PC-9 (cell line): ENCODE measurements at regions of chr14 and their contacts with region 1.

Region 1: GRCh38 chr14:32252030-32252670 is 49.1 kb upstream of the RNU6-8 start:
- DNase-seq: peak; percentile 31 to 50
- H3K4me3 ChIP-seq: no peak overlapping the region
- H3K27ac ChIP-seq: no peak overlapping the region
- H3K4me1 ChIP-seq: peaks cover 3% of the 10 kb centered on the region; the same call in 1 of the 2 replicates
- H3K27me3 ChIP-seq: no peaks in the 10 kb centered on the region
- CTCF ChIP-seq: peak; percentile 74

Region 2: DNA sequence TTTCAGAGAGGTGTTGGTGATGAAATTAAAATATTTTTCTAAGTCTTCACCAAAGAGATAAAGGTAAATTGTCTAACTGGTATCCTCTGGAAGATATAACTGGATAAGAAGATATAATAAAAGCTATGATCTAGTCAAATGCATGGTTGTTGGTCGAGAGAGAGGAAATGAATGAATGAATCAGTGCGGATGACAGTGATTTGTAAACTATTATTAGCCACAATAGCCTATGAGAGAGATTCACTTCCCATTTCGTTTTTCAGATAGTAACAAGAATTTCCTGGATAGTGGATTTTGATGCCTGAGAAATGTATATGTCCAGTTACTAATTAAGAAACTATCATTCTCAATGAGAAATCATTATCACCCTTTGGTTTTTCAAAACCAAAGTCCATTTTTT is 894.9 kb before region 1 on chr14:
- CTCF ChIA-PET with region 1: no interaction called
- POLR2A ChIA-PET with region 1: no interaction called
- intact Hi-C with region 1: loop called (anchors 10 kb)
- DNase-seq: no peak
- H3K4me3 ChIP-seq: no peak overlapping the region
- H3K27ac ChIP-seq: no peak overlapping the region
- H3K4me1 ChIP-seq: peaks cover 23% of the 10 kb centered on the region
- H3K27me3 ChIP-seq: no peaks in the 10 kb centered on the region
- CTCF ChIP-seq: no peak

Region 3: DNA sequence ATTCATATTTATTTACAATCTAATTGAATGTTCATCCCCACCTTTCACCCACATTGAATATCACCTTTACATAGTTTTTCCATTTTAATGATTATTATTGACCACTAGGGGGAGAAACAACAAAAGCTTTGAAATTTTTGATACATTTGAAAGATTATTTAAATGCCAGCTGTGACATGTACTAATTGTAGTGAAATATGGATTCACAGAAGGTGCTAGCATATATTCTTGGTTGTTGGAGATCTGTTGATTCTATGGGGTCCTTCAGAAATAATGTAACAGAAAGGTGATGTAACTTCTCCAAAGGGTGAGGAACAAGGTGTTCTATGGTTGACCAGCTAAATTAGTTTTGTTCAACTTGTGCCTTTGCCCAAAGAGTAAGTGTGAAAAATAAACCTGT is 741.9 kb before region 1 on chr14:
- CTCF ChIA-PET with region 1: interaction called, 4 read pairs
- POLR2A ChIA-PET with region 1: interaction called, 12 read pairs
- intact Hi-C with region 1: loop called (anchors 5 kb)
- DNase-seq: no peak
- H3K4me3 ChIP-seq: no peak overlapping the region
- H3K27ac ChIP-seq: no peak overlapping the region
- H3K4me1 ChIP-seq: no peaks in the 10 kb centered on the region
- H3K27me3 ChIP-seq: no peaks in the 10 kb centered on the region
- CTCF ChIP-seq: peak; percentile 81

Region 4: DNA sequence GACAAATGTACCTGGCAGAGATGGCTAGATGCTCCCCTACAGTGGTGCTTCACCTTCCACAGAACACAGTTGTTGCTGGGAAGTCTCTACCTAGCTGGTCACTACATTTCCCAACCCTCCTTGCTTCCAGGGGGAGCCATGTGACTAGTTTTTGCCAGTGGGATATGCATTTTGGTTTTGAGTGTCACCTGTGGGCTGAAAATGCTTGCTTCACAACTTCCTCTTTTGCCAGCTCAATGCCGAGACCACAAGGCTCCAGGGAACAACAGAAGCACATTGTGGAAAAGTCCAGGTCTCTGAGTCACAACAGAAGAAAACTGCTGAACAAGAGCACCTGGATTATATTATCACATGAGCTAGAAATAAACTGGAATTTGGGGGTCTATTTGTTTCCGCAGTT is 223.6 kb before region 1 on chr14:
- CTCF ChIA-PET with region 1: no interaction called
- POLR2A ChIA-PET with region 1: no interaction called
- intact Hi-C with region 1: no loop called
- DNase-seq: peak; percentile 11 to 54
- H3K4me3 ChIP-seq: no peak overlapping the region
- H3K27ac ChIP-seq: peak overlapping the region; percentile 51
- H3K4me1 ChIP-seq: peaks cover 21% of the 10 kb centered on the region; the same call in 1 of the 2 replicates
- H3K27me3 ChIP-seq: no peaks in the 10 kb centered on the region
- CTCF ChIP-seq: no peak

Region 5: DNA sequence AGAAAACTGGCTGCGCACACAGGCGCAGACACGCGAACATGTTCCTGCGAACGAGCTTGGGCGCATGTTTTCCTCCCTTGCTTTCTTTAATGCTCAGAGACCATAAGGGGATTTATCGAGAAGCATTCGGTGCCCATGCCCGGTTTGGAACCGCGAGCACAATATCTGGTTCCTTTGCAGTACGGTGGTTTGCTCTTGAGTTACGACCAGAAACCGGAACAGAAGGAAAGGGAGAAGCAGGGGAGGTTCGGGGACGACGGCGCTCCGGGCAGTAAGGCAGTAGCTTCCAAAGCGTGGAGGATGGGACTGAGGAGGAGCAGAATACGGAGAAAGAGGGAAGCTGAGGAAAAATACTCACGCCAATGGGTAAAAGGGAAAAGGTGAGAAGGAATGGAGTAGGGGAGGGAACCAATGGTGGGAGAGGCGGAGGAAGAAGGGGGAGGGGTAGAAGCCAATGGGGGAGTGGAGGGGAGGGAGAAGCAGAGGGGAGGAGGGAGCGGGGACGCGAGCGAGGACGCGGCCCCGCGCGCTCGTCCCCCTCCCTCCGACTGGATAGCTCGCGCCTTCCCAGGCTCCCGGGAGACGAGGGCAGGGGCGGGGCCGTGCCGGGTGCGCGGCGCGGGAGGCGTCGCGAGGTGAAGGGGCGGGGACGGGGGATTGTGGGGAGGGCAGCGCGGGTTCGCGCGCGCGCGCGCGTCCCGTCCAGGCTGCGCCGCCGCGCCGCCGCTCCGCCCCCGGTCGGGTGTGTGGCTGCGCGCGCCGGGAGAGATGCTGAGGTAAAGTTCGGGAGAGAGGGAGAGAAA is 175.7 kb before region 1 on chr14:
- CTCF ChIA-PET with region 1: no interaction called
- POLR2A ChIA-PET with region 1: no interaction called
- intact Hi-C with region 1: loop called (anchors 2 kb)
- DNase-seq: peak; percentile 75 to 91
- H3K4me3 ChIP-seq: peak overlapping the region; percentile 78
- H3K27ac ChIP-seq: peak overlapping the region; percentile 98
- H3K4me1 ChIP-seq: peaks cover 26% of the 10 kb centered on the region
- H3K27me3 ChIP-seq: no peaks in the 10 kb centered on the region
- CTCF ChIP-seq: no peak

Region 6: DNA sequence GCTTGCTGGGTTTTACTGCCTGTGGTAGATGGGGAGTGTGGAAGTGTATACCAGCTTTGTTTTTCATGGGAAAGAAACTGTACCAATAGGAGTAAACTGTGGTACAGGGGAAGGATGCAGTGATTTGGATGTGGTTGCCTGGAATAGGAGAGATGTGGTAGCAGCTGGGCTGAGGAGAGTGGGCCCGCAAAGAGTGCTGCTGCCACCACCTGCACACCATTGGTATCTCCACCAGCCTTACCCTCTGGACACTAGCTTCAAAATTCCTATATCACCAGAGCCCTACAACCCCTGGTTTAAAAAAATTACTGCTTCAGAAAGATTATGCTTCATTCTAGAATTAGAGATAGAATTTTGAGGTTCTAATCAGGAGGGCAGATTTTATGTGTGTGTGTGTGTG is 130.6 kb after region 1 on chr14:
- CTCF ChIA-PET with region 1: interaction called, 15 read pairs
- POLR2A ChIA-PET with region 1: no interaction called
- intact Hi-C with region 1: loop called (anchors 1 kb)
- DNase-seq: peak; percentile 30 to 34
- H3K4me3 ChIP-seq: no peak overlapping the region
- H3K27ac ChIP-seq: no peak overlapping the region
- H3K4me1 ChIP-seq: peaks cover 13% of the 10 kb centered on the region; the same call in 1 of the 2 replicates
- H3K27me3 ChIP-seq: no peaks in the 10 kb centered on the region
- CTCF ChIP-seq: peak; percentile 60

Region 7: DNA sequence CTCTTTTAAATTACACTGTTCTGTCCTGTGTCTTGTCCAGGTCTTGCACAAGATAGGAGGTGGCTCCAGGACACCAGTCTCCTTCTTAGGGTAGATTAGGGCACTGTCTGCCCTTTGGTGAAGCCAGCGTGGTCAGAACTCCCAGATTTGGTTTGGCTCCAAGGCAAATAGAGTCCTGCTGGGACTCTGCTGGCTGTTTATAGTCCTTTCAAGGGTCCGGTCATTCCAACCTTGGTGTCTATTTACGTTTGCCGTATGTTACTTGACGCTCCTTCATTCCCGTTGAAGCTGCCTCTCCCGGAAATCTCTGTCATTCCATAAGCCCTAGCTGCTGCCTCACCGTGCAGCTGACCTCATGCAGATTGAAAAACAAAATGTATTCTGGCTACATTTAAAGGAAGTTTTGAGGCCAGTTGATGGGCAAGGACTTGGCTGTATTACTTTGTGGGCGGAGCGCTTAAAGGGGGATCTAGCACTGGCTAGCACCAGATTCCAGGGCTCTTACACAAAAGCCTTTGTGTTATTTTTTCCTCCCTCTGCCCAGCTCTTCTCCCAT is 257.6 kb after region 1 on chr14:
- CTCF ChIA-PET with region 1: interaction called, 3 read pairs
- POLR2A ChIA-PET with region 1: no interaction called
- intact Hi-C with region 1: loop called (anchors 2 kb)
- DNase-seq: peak in 1 of 2 experiments; percentile 50
- H3K4me3 ChIP-seq: no peak overlapping the region
- H3K27ac ChIP-seq: no peak overlapping the region
- H3K4me1 ChIP-seq: peaks cover 41% of the 10 kb centered on the region
- H3K27me3 ChIP-seq: no peaks in the 10 kb centered on the region
- CTCF ChIP-seq: no peak